Prostate gland (tissue), 2 donors: ENCODE measurements at regions of chr12 and their contacts with region 1.

Region 1: DNA sequence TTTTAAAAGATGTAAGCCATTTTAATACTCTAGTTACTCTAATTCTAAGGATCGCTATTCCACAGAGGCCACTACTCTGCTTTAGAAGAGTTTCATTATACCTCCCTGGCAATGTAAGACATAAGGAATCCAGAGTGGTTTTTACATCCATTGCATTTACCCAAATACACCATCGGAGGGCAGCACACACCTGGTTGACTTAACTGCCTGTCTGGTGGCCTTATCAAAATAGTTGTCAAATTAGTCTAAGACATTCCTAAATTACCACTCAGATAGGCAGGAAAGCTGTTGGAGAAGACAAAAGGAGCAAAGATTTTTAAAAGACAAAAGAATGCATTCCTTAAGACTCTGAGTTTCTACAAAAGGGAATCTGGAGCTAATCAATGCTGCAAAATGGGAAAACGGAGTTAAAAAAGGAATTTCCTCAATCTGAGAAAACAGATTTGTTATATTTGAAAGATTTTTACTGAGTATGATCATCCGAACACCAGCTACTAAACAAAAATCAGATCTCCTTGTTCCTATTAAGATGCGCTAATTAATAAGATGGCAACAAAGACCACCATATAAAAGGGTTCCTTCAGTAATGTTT is 33.8 kb upstream of the FGD4 start:
- DNase-seq: peak; percentile 51
- H3K4me3 ChIP-seq: no peak overlapping the region
- H3K27ac ChIP-seq: no peak overlapping the region
- H3K4me1 ChIP-seq: no peaks in the 10 kb centered on the region
- H3K27me3 ChIP-seq: no peaks in the 10 kb centered on the region
- CTCF ChIP-seq: peak; percentile 37 to 82 (median 76)
- POLR2A ChIP-seq: no peak

Region 2: GRCh38 chr12:32076941-32077340 is 288.6 kb before region 1 on chr12:
- intact Hi-C with region 1: no loop called
- DNase-seq: no peak
- H3K4me3 ChIP-seq: no peak overlapping the region
- H3K27ac ChIP-seq: no peak overlapping the region
- H3K4me1 ChIP-seq: no peaks in the 10 kb centered on the region
- H3K27me3 ChIP-seq: no peaks in the 10 kb centered on the region
- CTCF ChIP-seq: no peak
- POLR2A ChIP-seq: no peak

Region 3: DNA sequence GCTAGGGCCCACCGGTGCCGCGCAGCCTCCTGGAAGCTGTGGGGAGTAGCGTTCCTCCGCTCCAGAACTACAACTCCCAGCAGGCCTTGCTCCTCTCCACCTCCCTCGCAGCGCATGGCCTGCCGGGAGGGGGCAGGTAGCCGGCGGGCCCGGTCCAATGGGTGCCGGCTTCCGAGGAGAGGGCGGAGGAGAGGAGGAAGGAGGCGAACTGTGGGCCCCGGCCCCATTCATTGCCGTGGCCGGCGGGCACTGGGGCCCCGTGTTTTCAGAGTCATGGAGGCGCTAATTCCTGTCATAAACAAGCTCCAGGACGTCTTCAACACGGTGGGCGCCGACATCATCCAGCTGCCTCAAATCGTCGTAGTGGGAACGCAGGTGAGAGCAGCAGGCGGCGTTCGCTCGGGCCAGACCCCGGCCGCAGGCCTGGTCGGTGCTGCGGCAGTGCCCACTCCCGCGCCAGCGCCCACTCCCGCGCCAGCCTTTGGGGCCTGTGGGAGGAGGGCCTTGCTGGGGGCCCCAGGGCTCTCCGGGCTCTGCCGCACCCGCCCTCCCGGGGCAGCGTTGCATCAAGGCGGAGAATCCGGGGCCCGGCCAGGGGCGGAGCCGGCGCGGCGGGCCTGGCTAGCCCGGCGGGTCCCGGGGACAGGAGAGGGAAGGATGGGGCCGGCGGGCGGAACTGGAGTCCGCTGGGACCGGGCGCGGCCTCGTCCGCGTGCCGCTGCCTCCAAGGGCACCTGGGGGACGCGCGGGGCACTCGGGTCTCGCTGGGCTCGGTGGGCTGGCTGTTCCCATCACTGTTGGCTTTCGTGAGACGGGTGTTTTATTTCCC is 313.7 kb after region 1 on chr12 and contains the start of gene DNM1L:
- intact Hi-C with region 1: loop called (anchors 10 kb)
- DNase-seq: peak; percentile 92
- H3K4me3 ChIP-seq: peak within 1 kb of the TSS; percentile 62 to 75
- H3K27ac ChIP-seq: peak within 1 kb of the TSS; percentile 88 to 91
- H3K4me1 ChIP-seq: peaks cover 5% of the 10 kb centered on the region
- H3K27me3 ChIP-seq: no peaks in the 10 kb centered on the region
- CTCF ChIP-seq: peak in 2 of 4 experiments; percentile 39 to 62
- POLR2A ChIP-seq: peak; percentile 89
- total RNA-seq, gene DNM1L: 37.3 to 47.5 TPM